ENCODE measurements at regions of chr10 and their contacts with region 1.

Region 1: DNA sequence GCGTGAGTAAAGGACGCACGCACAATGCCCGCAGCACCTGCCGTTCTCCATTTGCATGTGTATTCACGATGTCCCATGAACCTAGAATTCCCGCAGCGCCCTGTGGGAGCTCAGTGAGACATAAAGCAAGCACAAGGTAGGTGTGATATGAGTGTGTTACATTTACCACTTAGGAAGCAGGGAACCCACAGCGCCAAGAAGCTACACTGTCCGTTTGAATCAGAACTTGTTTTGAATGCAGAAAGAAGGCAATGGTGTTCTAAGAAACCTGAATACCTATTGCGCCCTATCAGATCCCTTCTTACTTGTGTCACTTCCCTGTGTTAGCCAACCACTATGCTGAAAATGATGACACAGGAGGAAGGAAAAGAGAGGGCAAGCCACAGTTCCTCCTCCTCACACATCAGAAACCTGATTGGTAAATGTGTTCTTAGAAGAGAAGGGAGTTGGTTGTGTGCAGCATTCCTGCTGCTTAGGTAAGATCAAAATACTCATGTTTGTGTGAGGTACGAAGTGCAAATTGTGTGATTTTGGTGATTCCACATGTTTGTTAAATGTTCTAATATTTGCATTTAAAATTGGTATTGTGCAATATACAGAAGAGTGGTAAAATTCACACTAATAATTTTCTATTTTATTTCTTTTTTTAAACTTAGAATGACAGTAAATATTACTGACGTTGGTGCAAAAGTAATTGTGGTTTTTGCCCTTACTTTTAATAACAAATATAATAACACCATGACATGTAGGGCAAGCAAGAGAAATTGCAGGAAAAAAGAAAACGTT is 185.4 kb downstream of the SEC23IP start:
- DNase-seq: no peak
- H3K4me3 ChIP-seq: no peak overlapping the region
- H3K4me3 Mint-ChIP-seq: no peak overlapping the region
- H3K27ac Mint-ChIP-seq: no peak overlapping the region
- H3K4me1 ChIP-seq: no peaks in the 10 kb centered on the region
- H3K4me1 Mint-ChIP-seq: no peaks in the 10 kb centered on the region
- H3K27me3 ChIP-seq: peaks cover 2% of the 10 kb centered on the region; the same call in 1 of the 2 replicates
- H3K27me3 Mint-ChIP-seq: peaks cover 33% of the 10 kb centered on the region
- CTCF ChIP-seq: no peak

Region 2: GRCh38 chr10:121753726-121754476 is 1676.0 kb after region 1 on chr10:
- CTCF ChIA-PET with region 1: interaction called, 11 read pairs
- POLR2A ChIA-PET with region 1: no interaction called
- intact Hi-C with region 1: no loop called
- DNase-seq: no peak
- H3K4me3 ChIP-seq: no peak overlapping the region
- H3K4me3 Mint-ChIP-seq: no peak overlapping the region
- H3K27ac Mint-ChIP-seq: no peak overlapping the region
- H3K4me1 ChIP-seq: no peaks in the 10 kb centered on the region
- H3K4me1 Mint-ChIP-seq: peaks cover 7% of the 10 kb centered on the region
- H3K27me3 ChIP-seq: no peaks in the 10 kb centered on the region
- H3K27me3 Mint-ChIP-seq: no peaks in the 10 kb centered on the region
- CTCF ChIP-seq: peak in 1 of 2 experiments; percentile 27

Measured in Caco-2 (cell line).